IMR-90 (cell line): ENCODE measurements at regions of chr6 and their contacts with region 1.

Region 1: DNA sequence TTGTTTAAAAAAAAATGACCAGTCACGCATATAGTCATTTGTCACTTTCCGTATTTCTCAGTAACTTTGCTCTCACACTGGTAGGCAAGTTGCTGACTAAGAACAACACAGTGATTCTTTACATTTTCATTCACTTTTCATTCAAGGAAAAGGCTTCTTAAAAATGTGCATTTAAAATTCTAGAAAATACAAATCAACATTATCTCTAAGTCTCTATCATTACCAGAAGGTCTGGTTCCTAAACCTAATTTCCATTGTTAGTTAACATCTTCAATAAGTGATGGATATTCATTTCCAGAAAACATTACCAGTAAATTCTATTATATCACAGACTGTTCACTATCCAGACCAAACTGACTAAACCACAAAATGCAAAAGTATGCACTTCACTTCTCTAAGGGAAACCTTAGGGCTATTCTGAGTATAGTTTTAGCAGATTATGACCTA is 115.3 kb downstream of the AHI1 start:
- DNase-seq: no peak
- ATAC-seq: no peak
- H3K4me3 ChIP-seq: no peak overlapping the region
- H3K27ac ChIP-seq: no peak overlapping the region
- H3K4me1 ChIP-seq: no peaks in the 10 kb centered on the region
- H3K27me3 ChIP-seq: no peaks in the 10 kb centered on the region
- CTCF ChIP-seq: no peak
- POLR2A ChIP-seq: no peak
- RAD21 ChIP-seq: no peak

Region 2: GRCh38 chr6:135411339-135411738 is 29.1 kb after region 1 on chr6:
- CTCF ChIA-PET with region 1: no interaction called
- POLR2A ChIA-PET with region 1: interaction called, 11 read pairs
- dilution Hi-C with region 1: no loop called
- in situ Hi-C with region 1: no loop called
- intact Hi-C with region 1: no loop called
- DNase-seq: no peak
- ATAC-seq: no peak
- H3K4me3 ChIP-seq: no peak overlapping the region
- H3K27ac ChIP-seq: no peak overlapping the region
- H3K4me1 ChIP-seq: no peaks in the 10 kb centered on the region
- H3K27me3 ChIP-seq: no peaks in the 10 kb centered on the region
- CTCF ChIP-seq: 0 out of 2 replicates have a peak, but pooled peaks have one; percentile 24
- POLR2A ChIP-seq: no peak
- RAD21 ChIP-seq: no peak